ENCODE measurements at regions of chr1 and their contacts with region 1.

Region 1: GRCh38 chr1:22704440-22705067 is 6.1 kb upstream of the EPHB2 start:
- DNase-seq: peak; percentile 75
- H3K4me3 Mint-ChIP-seq: no peak overlapping the region
- H3K27ac Mint-ChIP-seq: no peak overlapping the region
- H3K4me1 Mint-ChIP-seq: peaks cover 8% of the 10 kb centered on the region
- H3K27me3 Mint-ChIP-seq: peaks cover 26% of the 10 kb centered on the region

Region 2: GRCh38 chr1:22801761-22802160 is 97.2 kb after region 1 on chr1:
- CTCF ChIA-PET with region 1: no interaction called
- POLR2A ChIA-PET with region 1: no interaction called
- DNase-seq: no peak
- H3K4me3 Mint-ChIP-seq: no peak overlapping the region
- H3K27ac Mint-ChIP-seq: no peak overlapping the region
- H3K4me1 Mint-ChIP-seq: no peaks in the 10 kb centered on the region
- H3K27me3 Mint-ChIP-seq: peaks cover 6% of the 10 kb centered on the region

Region 3: DNA sequence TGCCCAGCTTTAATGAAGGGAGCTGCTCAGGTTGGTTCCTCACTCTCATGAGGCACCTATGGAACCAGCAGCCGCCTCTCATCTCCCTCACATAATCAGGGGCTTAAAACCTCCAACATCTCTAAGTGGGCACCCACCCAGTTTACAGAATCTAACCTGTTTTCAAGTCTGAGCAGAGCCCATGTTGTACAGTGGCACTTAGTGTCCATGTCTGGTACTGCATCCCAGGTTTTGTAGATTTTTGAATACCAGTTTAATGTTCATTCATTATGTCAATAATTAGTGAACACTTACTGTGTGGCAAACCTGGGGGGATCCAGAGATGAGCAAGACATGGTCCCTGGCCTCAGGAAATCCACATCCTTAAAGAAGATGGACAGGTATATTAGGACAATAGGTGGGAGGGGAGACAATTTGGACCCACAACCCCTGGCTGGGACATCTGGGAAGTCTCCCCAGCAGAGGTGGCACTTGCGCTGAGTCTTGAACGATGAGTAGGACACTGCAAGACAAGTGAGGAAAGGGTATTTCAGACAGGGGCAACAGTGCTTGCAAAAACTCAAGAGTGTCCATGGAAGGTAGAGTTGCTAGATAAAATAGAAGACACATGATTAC is 184.8 kb after region 1 on chr1:
- CTCF ChIA-PET with region 1: interaction called, 24 read pairs
- POLR2A ChIA-PET with region 1: no interaction called
- DNase-seq: no peak
- H3K4me3 Mint-ChIP-seq: no peak overlapping the region
- H3K27ac Mint-ChIP-seq: no peak overlapping the region
- H3K4me1 Mint-ChIP-seq: peaks cover 13% of the 10 kb centered on the region
- H3K27me3 Mint-ChIP-seq: peaks cover 19% of the 10 kb centered on the region

Region 4: GRCh38 chr1:22930235-22930912 is 225.8 kb after region 1 on chr1:
- CTCF ChIA-PET with region 1: interaction called, 20 read pairs
- POLR2A ChIA-PET with region 1: no interaction called
- DNase-seq: peak; percentile 32
- H3K4me3 Mint-ChIP-seq: no peak overlapping the region
- H3K27ac Mint-ChIP-seq: no peak overlapping the region
- H3K4me1 Mint-ChIP-seq: no peaks in the 10 kb centered on the region
- H3K27me3 Mint-ChIP-seq: peaks cover 5% of the 10 kb centered on the region